Activated T-helper 1 cell treated with anti-CD3 and anti-CD28 coated beads, Interleukin-12 subunit alpha, Interleukin-12 subunit beta, Interleukin-2, Interleukin-4 antibody, amounts not matched to agents 30 ng/mL and 10 ng/mL and 1 ng/mL, durations not matched to agents 14 hours and 24 hours and 36 hours (primary cell): ENCODE measurements at regions of chr10 and their contacts with region 1.

Region 1: GRCh38 chr10:62637249-62638061 is 167.1 kb upstream of the ADO start:
- DNase-seq: peak; percentile 73
- H3K4me3 Mint-ChIP-seq: no peak overlapping the region
- H3K27ac Mint-ChIP-seq: no peak overlapping the region
- H3K4me1 Mint-ChIP-seq: peaks cover 28% of the 10 kb centered on the region
- H3K27me3 Mint-ChIP-seq: no peaks in the 10 kb centered on the region

Region 2: GRCh38 chr10:61903221-61903927 is 734.1 kb before region 1 on chr10:
- intact Hi-C with region 1: loop called (anchors 5 kb)
- DNase-seq: peak; percentile 69
- H3K4me3 Mint-ChIP-seq: peak overlapping the region; percentile 97
- H3K27ac Mint-ChIP-seq: peak overlapping the region; percentile 95
- H3K4me1 Mint-ChIP-seq: peaks cover 60% of the 10 kb centered on the region
- H3K27me3 Mint-ChIP-seq: no peaks in the 10 kb centered on the region

Region 3: GRCh38 chr10:62647375-62648092 is 10.1 kb after region 1 on chr10:
- intact Hi-C with region 1: loop called (anchors 1 kb)
- DNase-seq: no peak
- H3K4me3 Mint-ChIP-seq: peak overlapping the region; percentile 15
- H3K27ac Mint-ChIP-seq: peak overlapping the region; percentile 77
- H3K4me1 Mint-ChIP-seq: peaks cover 65% of the 10 kb centered on the region
- H3K27me3 Mint-ChIP-seq: peaks cover 2% of the 10 kb centered on the region

Region 4: GRCh38 chr10:62669341-62669740 is 31.9 kb after region 1 on chr10:
- intact Hi-C with region 1: no loop called
- DNase-seq: no peak
- H3K4me3 Mint-ChIP-seq: no peak overlapping the region
- H3K27ac Mint-ChIP-seq: no peak overlapping the region
- H3K4me1 Mint-ChIP-seq: peaks cover 39% of the 10 kb centered on the region
- H3K27me3 Mint-ChIP-seq: no peaks in the 10 kb centered on the region

Region 5: DNA sequence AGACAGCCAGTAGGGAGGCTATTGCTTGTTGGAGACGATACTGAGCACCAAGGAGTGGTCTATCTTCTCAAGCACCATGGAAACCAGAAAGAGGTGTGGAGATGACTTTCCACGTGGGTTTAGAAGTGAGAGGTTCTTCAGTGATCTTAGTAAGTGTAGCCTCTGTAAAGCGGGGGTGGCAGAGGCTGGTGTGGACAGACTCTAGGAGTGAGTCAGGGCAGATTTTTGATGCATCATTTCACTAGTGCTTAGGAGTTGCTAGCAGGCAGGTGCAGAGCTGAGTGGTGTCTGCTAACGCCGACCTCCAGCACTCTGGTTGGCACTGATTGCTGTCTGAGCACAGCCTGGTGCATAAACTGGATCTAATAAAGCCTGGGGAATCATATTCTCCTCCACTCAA is 88.7 kb after region 1 on chr10:
- intact Hi-C with region 1: loop called (anchors 1 kb)
- DNase-seq: peak; percentile 16
- H3K4me3 Mint-ChIP-seq: peak overlapping the region; percentile 25
- H3K27ac Mint-ChIP-seq: peak overlapping the region; percentile 72
- H3K4me1 Mint-ChIP-seq: peaks cover 52% of the 10 kb centered on the region
- H3K27me3 Mint-ChIP-seq: peaks cover 8% of the 10 kb centered on the region

Region 6: GRCh38 chr10:62811159-62811875 is 173.9 kb after region 1 on chr10:
- intact Hi-C with region 1: loop called (anchors 1 kb)
- DNase-seq: peak; percentile 71
- H3K4me3 Mint-ChIP-seq: peak overlapping the region; percentile 98
- H3K27ac Mint-ChIP-seq: peak overlapping the region; percentile 94
- H3K4me1 Mint-ChIP-seq: peaks cover 84% of the 10 kb centered on the region
- H3K27me3 Mint-ChIP-seq: peaks cover 8% of the 10 kb centered on the region

Region 7: GRCh38 chr10:63068246-63068645 is 430.8 kb after region 1 on chr10:
- intact Hi-C with region 1: loop called (anchors 5 kb)
- DNase-seq: peak; percentile 2
- H3K4me3 Mint-ChIP-seq: no peak overlapping the region
- H3K27ac Mint-ChIP-seq: peak overlapping the region; percentile 19
- H3K4me1 Mint-ChIP-seq: peaks cover 25% of the 10 kb centered on the region
- H3K27me3 Mint-ChIP-seq: peaks cover 5% of the 10 kb centered on the region

Region 8: DNA sequence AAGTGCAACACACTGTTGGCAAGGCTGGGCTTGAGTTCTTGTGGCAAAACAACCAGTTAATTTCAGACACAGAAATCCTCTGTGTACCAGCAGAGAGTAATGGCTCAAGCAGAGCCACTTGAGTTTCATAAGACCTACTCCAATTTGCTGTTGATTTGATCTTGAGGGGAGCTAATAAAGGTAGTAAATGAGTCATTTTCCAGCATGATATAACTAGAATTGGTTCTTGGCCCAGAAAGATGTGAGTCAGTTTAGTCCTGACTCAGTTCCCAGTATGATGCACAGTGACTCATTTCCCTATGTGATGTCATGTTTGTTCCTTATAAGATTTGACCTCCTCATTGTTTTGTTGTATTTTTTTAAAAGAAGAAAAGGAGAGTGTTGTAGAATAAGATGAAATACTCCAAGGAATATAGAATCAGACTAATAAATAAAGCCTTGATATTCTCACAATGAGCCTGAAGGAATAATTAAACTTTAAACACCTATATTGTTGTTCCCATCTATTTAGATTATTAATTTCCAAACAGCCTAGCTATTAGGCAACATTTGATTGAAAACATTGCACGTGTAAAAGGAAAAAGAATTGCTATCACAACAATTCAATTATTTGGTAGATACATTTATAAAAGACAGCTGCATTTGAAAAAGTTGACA is 1069.9 kb after region 1 on chr10:
- intact Hi-C with region 1: loop called (anchors 5 kb)
- DNase-seq: peak; percentile 19
- H3K4me3 Mint-ChIP-seq: peak overlapping the region; percentile 3
- H3K27ac Mint-ChIP-seq: peak overlapping the region; percentile 61
- H3K4me1 Mint-ChIP-seq: peaks cover 22% of the 10 kb centered on the region
- H3K27me3 Mint-ChIP-seq: no peaks in the 10 kb centered on the region